GM12878 (cell line): ENCODE measurements at regions of chr5 and their contacts with region 1.

Region 1: GRCh38 chr5:76582230-76583162 is 40.7 kb downstream of the F2RL2 start:
- DNase-seq: peak; percentile 79
- ATAC-seq: peak; percentile 98
- H3K4me3 ChIP-seq: no peak overlapping the region
- H3K27ac ChIP-seq: peak overlapping the region; percentile 66
- H3K4me1 ChIP-seq: peaks cover 14% of the 10 kb centered on the region; the same call in 1 of the 2 replicates
- H3K27me3 ChIP-seq: no peaks in the 10 kb centered on the region
- CTCF ChIP-seq: no peak
- EP300 ChIP-seq: peak; percentile 81 to 98; a peak in 3 of 4 replicates
- POLR2A ChIP-seq: no peak
- RAD21 ChIP-seq: no peak

Region 2: GRCh38 chr5:76210946-76211345 is 371.6 kb before region 1 on chr5:
- CTCF ChIA-PET with region 1: no interaction called
- POLR2A ChIA-PET with region 1: no interaction called
- RAD21 ChIA-PET with region 1: no interaction called
- SMC1A ChIA-PET with region 1: no interaction called
- in situ Hi-C with region 1: no loop called
- intact Hi-C with region 1: no loop called
- DNase-seq: no peak
- ATAC-seq: no peak
- H3K4me3 ChIP-seq: no peak overlapping the region
- H3K27ac ChIP-seq: no peak overlapping the region
- H3K4me1 ChIP-seq: no peaks in the 10 kb centered on the region
- H3K27me3 ChIP-seq: no peaks in the 10 kb centered on the region
- CTCF ChIP-seq: no peak
- EP300 ChIP-seq: no peak
- POLR2A ChIP-seq: no peak
- RAD21 ChIP-seq: no peak

Region 3: GRCh38 chr5:76256116-76256889 is 326.2 kb before region 1 on chr5:
- CTCF ChIA-PET with region 1: interaction called, 16 read pairs
- POLR2A ChIA-PET with region 1: no interaction called
- RAD21 ChIA-PET with region 1: interaction called, 11 read pairs
- SMC1A ChIA-PET with region 1: interaction called, 31 read pairs
- in situ Hi-C with region 1: no loop called
- intact Hi-C with region 1: no loop called
- DNase-seq: no peak
- ATAC-seq: peak; percentile 98
- H3K4me3 ChIP-seq: no peak overlapping the region
- H3K27ac ChIP-seq: no peak overlapping the region
- H3K4me1 ChIP-seq: peaks cover 3% of the 10 kb centered on the region; the same call in 1 of the 2 replicates
- H3K27me3 ChIP-seq: no peaks in the 10 kb centered on the region
- CTCF ChIP-seq: peak; percentile 83 to 93 (median 85)
- EP300 ChIP-seq: no peak
- POLR2A ChIP-seq: no peak
- RAD21 ChIP-seq: peak; percentile 99

Region 4: GRCh38 chr5:76337953-76338451 is 244.5 kb before region 1 on chr5:
- CTCF ChIA-PET with region 1: interaction called, 20 read pairs
- POLR2A ChIA-PET with region 1: no interaction called
- RAD21 ChIA-PET with region 1: interaction called, 5 read pairs
- SMC1A ChIA-PET with region 1: interaction called, 12 read pairs
- in situ Hi-C with region 1: no loop called
- intact Hi-C with region 1: loop called (anchors 10 kb)
- DNase-seq: peak; percentile 24
- ATAC-seq: peak; percentile 86
- H3K4me3 ChIP-seq: no peak overlapping the region
- H3K27ac ChIP-seq: no peak overlapping the region
- H3K4me1 ChIP-seq: no peaks in the 10 kb centered on the region
- H3K27me3 ChIP-seq: no peaks in the 10 kb centered on the region
- CTCF ChIP-seq: peak; percentile 47 to 62 (median 57); a peak in 5 of 6 replicates
- EP300 ChIP-seq: no peak
- POLR2A ChIP-seq: no peak
- RAD21 ChIP-seq: peak; percentile 52

Region 5: DNA sequence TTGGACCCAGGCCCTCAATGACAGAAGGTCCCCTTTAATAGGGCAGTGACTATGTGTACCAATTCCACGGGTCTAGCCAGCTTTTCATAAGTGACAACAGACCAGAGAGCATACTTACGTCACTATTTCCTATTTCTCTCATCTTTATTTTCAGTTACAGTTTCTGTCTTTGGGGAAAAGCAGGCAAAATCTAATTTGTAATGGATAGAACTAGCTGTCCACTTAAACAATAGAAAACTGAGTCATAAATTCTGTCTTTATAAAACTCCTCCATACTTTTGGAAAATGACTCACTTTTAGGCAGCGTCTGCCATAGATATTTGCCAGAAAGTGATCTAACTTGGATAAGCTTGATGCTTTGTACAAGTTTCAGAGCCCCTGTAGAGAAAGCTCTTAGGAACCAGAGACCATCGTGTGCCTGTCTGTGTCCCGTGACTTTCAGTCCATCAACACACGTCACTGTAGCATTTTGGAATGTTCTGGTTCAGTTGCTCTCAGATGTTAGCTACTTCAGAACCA is 61.2 kb before region 1 on chr5:
- CTCF ChIA-PET with region 1: interaction called, 6 read pairs
- POLR2A ChIA-PET with region 1: no interaction called
- RAD21 ChIA-PET with region 1: interaction called, 11 read pairs
- SMC1A ChIA-PET with region 1: interaction called, 19 read pairs
- in situ Hi-C with region 1: no loop called
- intact Hi-C with region 1: no loop called
- DNase-seq: no peak
- ATAC-seq: peak; percentile 93
- H3K4me3 ChIP-seq: no peak overlapping the region
- H3K27ac ChIP-seq: peak overlapping the region; percentile 78
- H3K4me1 ChIP-seq: peaks cover 8% of the 10 kb centered on the region; the same call in 1 of the 2 replicates
- H3K27me3 ChIP-seq: no peaks in the 10 kb centered on the region
- CTCF ChIP-seq: no peak
- EP300 ChIP-seq: no peak; a peak in 1 of 4 replicates
- POLR2A ChIP-seq: no peak
- RAD21 ChIP-seq: no peak

Region 6: DNA sequence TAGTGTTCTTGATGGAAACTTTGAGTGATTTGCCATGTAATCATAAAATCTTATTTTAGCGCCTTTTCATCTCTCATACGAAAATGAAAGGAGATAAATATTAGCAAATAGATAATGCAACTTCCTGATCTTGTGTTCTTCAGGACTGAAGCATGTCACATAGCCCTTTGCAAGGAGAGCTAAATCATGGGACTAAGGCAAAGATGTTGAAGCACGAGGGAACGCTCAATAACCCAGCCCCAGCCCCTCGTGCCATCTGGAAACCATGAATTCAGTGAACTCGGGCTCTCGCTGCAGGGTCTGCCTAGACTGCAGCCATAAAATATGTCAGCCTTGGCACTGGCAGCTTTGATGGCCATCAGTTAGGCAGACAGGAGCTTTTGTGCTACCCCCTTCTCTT is 17.5 kb before region 1 on chr5:
- CTCF ChIA-PET with region 1: interaction called, 40 read pairs
- POLR2A ChIA-PET with region 1: interaction called, 4 read pairs
- RAD21 ChIA-PET with region 1: interaction called, 4 read pairs
- SMC1A ChIA-PET with region 1: interaction called, 28 read pairs
- in situ Hi-C with region 1: no loop called
- intact Hi-C with region 1: no loop called
- DNase-seq: no peak
- ATAC-seq: no peak
- H3K4me3 ChIP-seq: no peak overlapping the region
- H3K27ac ChIP-seq: no peak overlapping the region
- H3K4me1 ChIP-seq: peaks cover 8% of the 10 kb centered on the region
- H3K27me3 ChIP-seq: no peaks in the 10 kb centered on the region
- CTCF ChIP-seq: no peak
- EP300 ChIP-seq: no peak
- POLR2A ChIP-seq: no peak
- RAD21 ChIP-seq: no peak

Region 7: GRCh38 chr5:76641514-76642120 is 59.1 kb after region 1 on chr5:
- CTCF ChIA-PET with region 1: interaction called, 11 read pairs
- POLR2A ChIA-PET with region 1: no interaction called
- RAD21 ChIA-PET with region 1: interaction called, 4 read pairs
- SMC1A ChIA-PET with region 1: interaction called, 4 read pairs
- in situ Hi-C with region 1: no loop called
- intact Hi-C with region 1: no loop called
- DNase-seq: peak; percentile 15
- ATAC-seq: peak; percentile 89
- H3K4me3 ChIP-seq: no peak overlapping the region
- H3K27ac ChIP-seq: no peak overlapping the region
- H3K4me1 ChIP-seq: peaks cover 11% of the 10 kb centered on the region; the same call in 1 of the 2 replicates
- H3K27me3 ChIP-seq: no peaks in the 10 kb centered on the region
- CTCF ChIP-seq: peak; percentile 74 to 82 (median 79)
- EP300 ChIP-seq: no peak
- POLR2A ChIP-seq: no peak
- RAD21 ChIP-seq: peak; percentile 94

Region 8: GRCh38 chr5:78090002-78090401 is 1507.5 kb after region 1 on chr5:
- CTCF ChIA-PET with region 1: no interaction called
- POLR2A ChIA-PET with region 1: no interaction called
- RAD21 ChIA-PET with region 1: no interaction called
- SMC1A ChIA-PET with region 1: no interaction called
- in situ Hi-C with region 1: no loop called
- intact Hi-C with region 1: no loop called
- DNase-seq: no peak
- ATAC-seq: no peak
- H3K4me3 ChIP-seq: no peak overlapping the region
- H3K27ac ChIP-seq: no peak overlapping the region
- H3K4me1 ChIP-seq: no peaks in the 10 kb centered on the region
- H3K27me3 ChIP-seq: no peaks in the 10 kb centered on the region
- CTCF ChIP-seq: no peak
- EP300 ChIP-seq: no peak
- POLR2A ChIP-seq: no peak
- RAD21 ChIP-seq: no peak